Upper lobe of right lung (tissue), 1 donor: ENCODE measurements at regions of chr1 and their contacts with region 1.

Region 1: DNA sequence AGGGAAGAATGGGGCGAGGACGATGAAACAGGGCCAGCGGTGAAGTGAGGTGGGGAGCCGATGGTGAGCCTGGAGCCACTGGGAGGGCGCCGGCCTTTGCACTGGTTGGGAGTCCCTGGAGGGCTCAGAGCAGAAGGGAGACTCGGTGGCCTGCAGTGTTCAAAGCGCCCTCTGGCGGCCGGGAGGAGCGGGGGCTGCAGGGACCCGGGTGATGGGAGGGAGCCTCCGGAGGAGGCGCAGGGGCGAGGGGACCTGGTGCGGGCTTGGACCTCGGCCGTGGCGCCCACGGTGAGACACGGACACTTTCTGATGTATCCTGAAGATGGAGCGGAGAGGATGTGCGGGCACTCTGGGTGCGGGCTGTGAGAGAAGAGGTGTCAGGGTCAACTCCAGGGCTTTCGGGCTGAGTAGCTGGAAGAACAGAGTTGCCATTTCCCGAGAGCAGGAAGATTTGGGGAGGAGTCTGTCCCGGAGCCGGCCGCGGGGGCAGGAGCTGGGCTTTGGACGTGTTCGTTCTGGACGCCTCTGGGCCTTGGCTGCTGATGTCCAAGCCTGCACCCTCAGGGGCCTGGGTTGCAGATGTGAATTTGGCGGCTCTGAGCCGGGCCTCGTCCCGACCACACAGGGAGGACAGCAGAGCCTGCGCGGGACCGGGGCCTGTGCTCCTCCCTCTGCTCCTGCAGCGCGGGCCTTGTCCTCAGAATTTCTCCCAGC is 29.7 kb downstream of the HEYL start:
- DNase-seq: peak; percentile 87
- ATAC-seq: peak; percentile 92
- H3K4me3 ChIP-seq: no peak overlapping the region
- H3K27ac ChIP-seq: no peak overlapping the region
- H3K4me1 ChIP-seq: no peaks in the 10 kb centered on the region
- H3K27me3 ChIP-seq: no peaks in the 10 kb centered on the region
- CTCF ChIP-seq: peak; percentile 89

Region 2: GRCh38 chr1:39653546-39654031 is 43.8 kb after region 1 on chr1:
- intact Hi-C with region 1: loop called (anchors 5 kb)
- DNase-seq: peak; percentile 85
- ATAC-seq: peak; percentile 88
- H3K4me3 ChIP-seq: no peak overlapping the region
- H3K27ac ChIP-seq: no peak overlapping the region
- H3K4me1 ChIP-seq: peaks cover 4% of the 10 kb centered on the region
- H3K27me3 ChIP-seq: no peaks in the 10 kb centered on the region
- CTCF ChIP-seq: peak; percentile 90

Region 3: GRCh38 chr1:39720094-39720999 is 110.6 kb after region 1 on chr1:
- intact Hi-C with region 1: loop called (anchors 10 kb)
- DNase-seq: no peak
- ATAC-seq: peak; percentile 83
- H3K4me3 ChIP-seq: no peak overlapping the region
- H3K27ac ChIP-seq: no peak overlapping the region
- H3K4me1 ChIP-seq: no peaks in the 10 kb centered on the region
- H3K27me3 ChIP-seq: peaks cover 18% of the 10 kb centered on the region
- CTCF ChIP-seq: peak; percentile 76